ENCODE measurements at regions of chr17 and their contacts with region 1.

Region 1: GRCh38 chr17:61412143-61412859 is 12.7 kb downstream of the TBX2 start:
- DNase-seq: peak; percentile 83
- H3K4me3 Mint-ChIP-seq: peak overlapping the region; percentile 65
- H3K27ac Mint-ChIP-seq: no peak overlapping the region
- H3K4me1 Mint-ChIP-seq: peaks cover 24% of the 10 kb centered on the region
- H3K27me3 Mint-ChIP-seq: peaks cover 33% of the 10 kb centered on the region

Region 2: DNA sequence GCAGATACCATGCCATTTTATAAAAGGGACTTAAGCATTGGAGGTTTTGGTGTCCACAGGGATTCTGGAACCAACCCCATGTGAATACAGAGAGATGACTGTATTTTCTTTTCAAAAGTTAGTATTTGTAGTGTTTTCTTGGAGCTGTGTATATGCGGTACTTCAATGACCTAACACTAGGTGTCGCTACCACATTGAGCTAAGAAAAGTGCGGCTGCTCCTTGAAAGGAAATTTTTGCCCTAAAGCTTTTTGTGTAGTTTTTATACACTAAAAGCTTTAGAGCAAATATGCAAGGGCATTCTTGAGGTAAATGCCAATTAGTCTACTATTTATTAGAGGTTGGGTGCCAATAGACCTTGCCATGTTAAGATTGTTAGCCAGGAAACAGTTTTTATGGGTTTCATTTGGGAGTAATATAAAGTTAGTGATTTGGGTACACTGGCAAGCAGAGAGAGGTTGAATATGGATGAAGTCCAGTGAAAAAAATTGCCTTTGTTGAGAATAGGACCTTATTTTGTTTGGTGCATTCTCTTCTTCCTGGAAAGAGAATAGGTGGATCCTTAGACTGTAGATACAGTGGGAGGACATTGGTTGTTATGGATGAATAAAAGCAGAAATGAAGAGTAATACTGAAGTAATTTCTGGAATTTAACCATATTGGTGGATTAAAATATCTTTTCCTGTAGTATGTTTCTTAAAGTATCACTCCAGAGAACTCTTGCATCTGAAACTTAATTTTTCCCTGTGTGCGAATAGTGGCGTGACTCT is 691.4 kb before region 1 on chr17:
- CTCF ChIA-PET with region 1: interaction called, 7 read pairs
- POLR2A ChIA-PET with region 1: no interaction called
- intact Hi-C with region 1: loop called (anchors 5 kb)
- DNase-seq: peak; percentile 36
- H3K4me3 Mint-ChIP-seq: no peak overlapping the region
- H3K27ac Mint-ChIP-seq: no peak overlapping the region
- H3K4me1 Mint-ChIP-seq: no peaks in the 10 kb centered on the region
- H3K27me3 Mint-ChIP-seq: no peaks in the 10 kb centered on the region

Region 3: GRCh38 chr17:61454381-61455323 is 42.4 kb after region 1 on chr17:
- CTCF ChIA-PET with region 1: interaction called, 10 read pairs
- POLR2A ChIA-PET with region 1: interaction called, 3 read pairs
- intact Hi-C with region 1: no loop called
- DNase-seq: no peak
- H3K4me3 Mint-ChIP-seq: no peak overlapping the region
- H3K27ac Mint-ChIP-seq: no peak overlapping the region
- H3K4me1 Mint-ChIP-seq: peaks cover 33% of the 10 kb centered on the region
- H3K27me3 Mint-ChIP-seq: peaks cover 68% of the 10 kb centered on the region

Region 4: GRCh38 chr17:61551255-61551742 is 139.0 kb after region 1 on chr17:
- CTCF ChIA-PET with region 1: interaction called, 25 read pairs
- POLR2A ChIA-PET with region 1: interaction called, 3 read pairs
- intact Hi-C with region 1: loop called (anchors 1 kb)
- DNase-seq: no peak
- H3K4me3 Mint-ChIP-seq: no peak overlapping the region
- H3K27ac Mint-ChIP-seq: no peak overlapping the region
- H3K4me1 Mint-ChIP-seq: peaks cover 5% of the 10 kb centered on the region
- H3K27me3 Mint-ChIP-seq: peaks cover 25% of the 10 kb centered on the region

Region 5: DNA sequence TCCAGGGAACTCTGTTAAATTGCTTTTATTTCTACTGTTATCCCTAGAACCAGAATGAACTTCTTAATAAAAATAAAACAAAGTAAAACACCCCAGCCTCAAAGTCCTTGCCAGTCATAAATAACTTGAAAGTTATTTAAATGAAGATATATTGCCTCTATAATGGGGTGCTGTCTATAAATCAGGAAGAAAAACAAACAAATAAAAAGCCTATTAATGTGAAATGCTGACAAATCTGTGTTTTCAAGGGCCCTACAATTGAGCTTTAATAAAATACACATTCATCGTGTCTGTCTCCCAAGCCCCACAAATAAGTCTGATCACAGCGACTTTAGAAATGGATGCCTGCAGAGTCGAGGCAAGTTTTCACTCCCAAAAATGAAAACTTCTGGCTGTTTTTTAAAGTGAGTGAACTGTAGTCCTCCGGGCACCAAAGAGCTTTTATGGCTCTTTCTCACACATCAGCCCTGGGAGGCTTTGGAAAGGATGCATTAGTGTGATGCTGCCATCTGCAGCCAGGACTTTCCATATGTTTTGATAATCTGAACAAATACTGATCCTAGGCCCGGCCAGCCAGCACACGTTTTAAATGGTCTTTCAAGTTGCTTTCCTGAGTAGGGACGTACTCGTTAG is 162.4 kb after region 1 on chr17:
- CTCF ChIA-PET with region 1: interaction called, 19 read pairs
- POLR2A ChIA-PET with region 1: no interaction called
- intact Hi-C with region 1: no loop called
- DNase-seq: peak; percentile 11
- H3K4me3 Mint-ChIP-seq: no peak overlapping the region
- H3K27ac Mint-ChIP-seq: no peak overlapping the region
- H3K4me1 Mint-ChIP-seq: peaks cover 2% of the 10 kb centered on the region
- H3K27me3 Mint-ChIP-seq: peaks cover 9% of the 10 kb centered on the region

Region 6: GRCh38 chr17:61837175-61838051 is 425.1 kb after region 1 on chr17:
- CTCF ChIA-PET with region 1: interaction called, 12 read pairs
- POLR2A ChIA-PET with region 1: no interaction called
- intact Hi-C with region 1: loop called (anchors 5 kb)
- DNase-seq: peak; percentile 56
- H3K4me3 Mint-ChIP-seq: no peak overlapping the region
- H3K27ac Mint-ChIP-seq: no peak overlapping the region
- H3K4me1 Mint-ChIP-seq: no peaks in the 10 kb centered on the region
- H3K27me3 Mint-ChIP-seq: no peaks in the 10 kb centered on the region